MCF 10A (cell line): ENCODE measurements at regions of chr14 and their contacts with region 1.

Region 1: GRCh38 chr14:26917086-26917485 is 319.3 kb upstream of the NOVA1 start:
- DNase-seq: peak; percentile 44
- H3K4me3 Mint-ChIP-seq: no peak overlapping the region
- H3K27ac Mint-ChIP-seq: no peak overlapping the region
- H3K4me1 Mint-ChIP-seq: no peaks in the 10 kb centered on the region
- H3K27me3 Mint-ChIP-seq: peaks cover 46% of the 10 kb centered on the region
- CTCF ChIP-seq: peak; percentile 42

Region 2: DNA sequence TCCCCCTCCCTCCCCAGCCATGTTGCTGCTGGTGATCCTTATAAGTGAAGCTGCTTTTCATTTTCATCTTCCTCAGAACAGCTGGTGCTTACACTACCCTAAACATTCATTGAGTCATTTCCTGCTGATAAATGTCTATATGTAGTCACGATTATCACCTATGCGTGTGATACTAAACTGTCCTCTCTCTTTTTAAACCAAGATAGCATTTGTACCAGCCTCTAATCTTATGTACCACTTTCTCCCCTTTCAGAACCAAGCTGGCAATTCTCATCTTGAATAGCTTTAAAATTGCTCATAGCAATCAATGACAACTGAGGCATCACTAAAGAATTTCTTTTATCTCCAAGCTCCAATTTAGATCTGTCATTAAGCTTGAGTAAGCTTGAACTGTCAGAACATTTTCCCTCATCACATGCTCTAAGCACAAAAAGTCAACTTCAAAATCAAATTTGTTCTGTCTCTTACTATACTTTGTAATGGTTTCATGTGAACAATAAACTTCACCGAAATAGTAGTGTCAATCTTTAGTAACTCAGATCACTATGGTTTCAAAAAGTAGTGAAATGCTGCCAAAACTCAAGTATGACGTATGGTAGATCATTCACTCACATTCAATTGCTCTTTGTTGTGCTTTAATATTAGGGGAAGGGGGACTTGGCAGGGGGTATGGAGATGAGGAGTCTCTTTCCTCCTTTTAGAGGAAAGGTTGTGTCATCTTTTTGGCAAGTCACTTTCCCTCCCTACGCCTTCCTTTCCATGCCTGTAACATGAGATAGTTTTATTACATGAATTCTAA is 141.1 kb before region 1 on chr14:
- CTCF ChIA-PET with region 1: no interaction called
- POLR2A ChIA-PET with region 1: no interaction called
- intact Hi-C with region 1: loop called (anchors 10 kb)
- DNase-seq: peak; percentile 8
- H3K4me3 Mint-ChIP-seq: peak overlapping the region; percentile 19
- H3K27ac Mint-ChIP-seq: peak overlapping the region; percentile 12
- H3K4me1 Mint-ChIP-seq: peaks cover 24% of the 10 kb centered on the region
- H3K27me3 Mint-ChIP-seq: no peaks in the 10 kb centered on the region
- CTCF ChIP-seq: no peak

Region 3: GRCh38 chr14:27366596-27366995 is 449.5 kb after region 1 on chr14:
- CTCF ChIA-PET with region 1: no interaction called
- POLR2A ChIA-PET with region 1: no interaction called
- intact Hi-C with region 1: no loop called
- DNase-seq: no peak
- H3K4me3 Mint-ChIP-seq: no peak overlapping the region
- H3K27ac Mint-ChIP-seq: no peak overlapping the region
- H3K4me1 Mint-ChIP-seq: no peaks in the 10 kb centered on the region
- H3K27me3 Mint-ChIP-seq: no peaks in the 10 kb centered on the region
- CTCF ChIP-seq: no peak